ENCODE measurements at regions of chr1 and their contacts with region 1.

Region 1: DNA sequence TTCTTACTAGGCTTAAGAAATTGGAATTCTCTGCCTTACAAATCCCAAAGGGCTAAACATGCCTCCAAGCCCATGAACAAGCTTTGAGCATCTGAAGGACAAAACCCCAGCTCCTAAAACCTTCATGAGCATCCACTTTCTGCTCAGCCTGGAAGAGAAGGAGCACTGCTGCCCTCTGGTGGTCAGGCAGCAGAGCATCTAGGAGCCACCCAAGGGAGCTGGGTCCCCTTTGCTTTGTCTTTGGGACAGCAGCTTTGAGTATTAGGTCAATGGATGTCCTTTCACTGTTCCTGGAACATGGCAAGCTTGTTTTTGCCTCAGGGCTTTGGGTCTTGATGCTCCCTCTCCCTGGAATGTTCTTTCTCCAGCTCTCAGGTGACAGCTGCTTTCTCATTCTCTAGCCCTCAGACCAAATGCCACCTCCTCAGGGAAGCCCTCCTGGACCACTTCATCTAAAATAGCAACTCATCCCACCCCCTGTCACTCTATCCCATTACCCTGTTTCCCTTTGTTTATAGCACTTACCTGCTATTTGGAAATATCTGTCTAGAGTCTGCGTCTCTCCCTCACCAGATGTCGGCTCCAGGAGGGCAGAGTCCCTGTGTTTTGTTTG is 25.7 kb downstream of the RAB7B start:
- DNase-seq: peak; percentile 71 to 81
- ATAC-seq: peak; percentile 69 to 90 (median 82)
- H3K4me3 ChIP-seq: no peak overlapping the region
- H3K27ac ChIP-seq: peak overlapping the region in 9 of 10 donors; percentile 49 to 91 (median 79)
- H3K4me1 ChIP-seq: peaks cover 5 to 22% (median 20%) of the 10 kb centered on the region in 9 donors
- H3K27me3 ChIP-seq: no peaks in the 10 kb centered on the region
- CTCF ChIP-seq: peak; percentile 89 to 97 (median 96)

Region 2: GRCh38 chr1:205658943-205659581 is 318.4 kb before region 1 on chr1:
- intact Hi-C with region 1: loop called in 7 of 10 experiments (anchors 1 to 5 kb)
- DNase-seq: peak; percentile 77 to 86
- ATAC-seq: peak; percentile 76 to 91 (median 86)
- H3K4me3 ChIP-seq: no peak overlapping the region
- H3K27ac ChIP-seq: no peak overlapping the region
- H3K4me1 ChIP-seq: peaks cover 0 to 18% (median 8%) of the 10 kb centered on the region in 9 donors
- H3K27me3 ChIP-seq: no peaks in the 10 kb centered on the region
- CTCF ChIP-seq: peak; percentile 72 to 97 (median 88)

Region 3: GRCh38 chr1:205791568-205792180 is 185.8 kb before region 1 on chr1:
- intact Hi-C with region 1: loop called (anchors 1 to 5 kb)
- DNase-seq: peak; percentile 38 to 67
- ATAC-seq: peak; percentile 62 to 83 (median 76)
- H3K4me3 ChIP-seq: no peak overlapping the region
- H3K27ac ChIP-seq: peak overlapping the region in 2 of 10 donors; percentile 15 to 28
- H3K4me1 ChIP-seq: peaks cover 0 to 32% (median 5%) of the 10 kb centered on the region in 9 donors
- H3K27me3 ChIP-seq: no peaks in the 10 kb centered on the region
- CTCF ChIP-seq: peak; percentile 31 to 82 (median 79)

Region 4: DNA sequence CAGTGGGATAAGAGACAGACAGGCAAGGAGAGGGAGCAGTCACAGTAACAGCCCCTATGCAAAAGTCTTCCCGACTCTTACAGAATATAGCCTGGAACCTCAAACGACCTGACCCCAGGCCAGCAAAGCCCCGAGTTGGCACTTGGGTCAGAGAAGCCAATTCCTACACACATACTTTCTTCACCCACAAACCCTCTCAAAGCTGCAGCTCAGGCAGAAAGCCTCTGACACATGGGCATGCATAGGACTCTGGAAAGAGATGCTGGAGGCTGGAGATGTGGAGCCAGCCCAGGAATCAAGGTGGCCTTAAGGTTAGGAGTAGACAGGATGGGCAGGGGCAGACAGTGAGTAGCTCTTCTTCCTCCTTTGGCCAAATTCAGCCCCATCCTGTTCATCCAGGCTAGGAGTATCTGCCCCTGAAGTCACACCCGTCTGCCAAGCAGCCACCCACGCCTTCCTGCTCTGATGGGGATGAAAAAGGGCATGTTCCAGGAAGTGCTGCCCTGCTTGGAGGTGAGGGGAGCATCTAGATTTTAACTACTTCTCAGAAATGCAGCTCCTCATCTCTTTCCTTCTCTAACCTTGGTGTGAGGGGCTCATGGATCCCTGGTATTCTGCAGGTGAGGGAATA is 172.3 kb before region 1 on chr1:
- intact Hi-C with region 1: loop called in 1 of 10 experiments (anchors 5 kb)
- DNase-seq: no peak
- ATAC-seq: no peak
- H3K4me3 ChIP-seq: peak overlapping the region in 6 of 10 donors; percentile 0 to 77 (median 18)
- H3K27ac ChIP-seq: peak overlapping the region in 1 of 10 donors; percentile 25
- H3K4me1 ChIP-seq: peaks cover 3 to 98% (median 63%) of the 10 kb centered on the region in 9 donors
- H3K27me3 ChIP-seq: no peaks in the 10 kb centered on the region
- CTCF ChIP-seq: no peak

Region 5: GRCh38 chr1:205925730-205926129 is 51.8 kb before region 1 on chr1:
- intact Hi-C with region 1: loop called in 2 of 10 experiments (anchors 2 to 5 kb)
- DNase-seq: no peak
- ATAC-seq: no peak
- H3K4me3 ChIP-seq: no peak overlapping the region
- H3K27ac ChIP-seq: no peak overlapping the region
- H3K4me1 ChIP-seq: peaks cover 0 to 9% (median 3%) of the 10 kb centered on the region in 9 donors
- H3K27me3 ChIP-seq: no peaks in the 10 kb centered on the region
- CTCF ChIP-seq: no peak

Measured in heart right ventricle (tissue), 16 donors.